Naive thymus-derived CD8-positive, alpha-beta T cell (primary cell): ENCODE measurements at regions of chr7 and their contacts with region 1.

Region 1: GRCh38 chr7:151876899-151877777 is at the start of gene PRKAG2:
- DNase-seq: peak; percentile 65 to 91 (median 81)
- ATAC-seq: peak; percentile 66 to 70
- H3K4me3 Mint-ChIP-seq: peak within 1 kb of the TSS; percentile 91 to 99 (median 96)
- H3K27ac Mint-ChIP-seq: peak within 1 kb of the TSS; percentile 80 to 98 (median 95)
- H3K4me1 Mint-ChIP-seq: peaks cover 8 to 25% (median 21%) of the 10 kb centered on the region in 4 donors
- H3K27me3 Mint-ChIP-seq: no peaks in the 10 kb centered on the region
- polyA plus RNA-seq, gene PRKAG2: 29.5 to 34.1 (median 30.7) TPM

Region 2: GRCh38 chr7:151631968-151632749 is 245.0 kb before region 1 on chr7:
- POLR2A ChIA-PET with region 1: interaction called, 10 read pairs
- DNase-seq: peak; percentile 81 to 90 (median 87)
- ATAC-seq: peak; percentile 84 to 85
- H3K4me3 Mint-ChIP-seq: peak overlapping the region; percentile 93 to 99 (median 96)
- H3K27ac Mint-ChIP-seq: peak overlapping the region; percentile 85 to 99 (median 96)
- H3K4me1 Mint-ChIP-seq: peaks cover 17 to 39% (median 36%) of the 10 kb centered on the region in 4 donors
- H3K27me3 Mint-ChIP-seq: no peaks in the 10 kb centered on the region

Region 3: DNA sequence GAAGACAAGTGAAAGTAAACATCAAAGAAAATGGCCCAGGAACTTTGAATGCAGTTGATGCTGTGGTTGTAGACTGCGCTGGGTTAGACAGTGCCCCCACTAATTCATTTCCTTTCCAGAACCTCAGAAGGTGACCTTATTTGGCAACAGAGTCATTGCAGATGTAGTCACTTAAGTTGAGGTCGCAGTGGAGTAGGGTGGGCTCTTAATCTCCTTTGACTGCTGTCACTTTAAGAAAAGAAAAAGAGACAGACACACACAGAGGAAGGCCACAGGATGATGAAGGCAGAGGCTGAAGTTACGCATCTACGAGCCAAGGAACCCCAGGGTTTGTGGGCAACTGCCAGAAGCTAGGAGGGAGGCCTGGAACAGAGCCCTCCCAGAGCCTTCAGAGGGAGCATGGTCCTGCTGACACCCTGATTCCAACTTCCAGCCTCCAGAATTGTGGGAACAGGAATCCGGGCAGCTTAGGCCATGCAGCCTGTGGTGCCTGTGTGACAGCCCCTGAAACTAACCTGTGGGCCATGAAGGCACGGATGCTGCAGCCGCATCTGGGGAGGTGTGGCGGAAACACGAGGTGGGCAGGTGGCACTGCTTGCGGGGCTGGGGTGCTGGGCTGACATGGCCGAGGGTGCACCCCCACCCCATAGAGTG is 107.8 kb before region 1 on chr7:
- POLR2A ChIA-PET with region 1: interaction called, 10 read pairs
- DNase-seq: peak in 9 of 10 donors; percentile 23 to 88 (median 76)
- ATAC-seq: peak; percentile 90 to 92
- H3K4me3 Mint-ChIP-seq: peak overlapping the region; percentile 69 to 95 (median 86)
- H3K27ac Mint-ChIP-seq: peak overlapping the region; percentile 90 to 99 (median 98)
- H3K4me1 Mint-ChIP-seq: peaks cover 46 to 91% (median 74%) of the 10 kb centered on the region in 4 donors
- H3K27me3 Mint-ChIP-seq: no peaks in the 10 kb centered on the region

Region 4: GRCh38 chr7:151851145-151851751 is 25.9 kb before region 1 on chr7:
- POLR2A ChIA-PET with region 1: interaction called, 16 read pairs
- DNase-seq: peak in 2 of 10 donors; percentile 11 to 14
- ATAC-seq: peak; percentile 53 to 57
- H3K4me3 Mint-ChIP-seq: peak overlapping the region in 9 of 10 donors; percentile 39 to 77 (median 64)
- H3K27ac Mint-ChIP-seq: peak overlapping the region in 9 of 10 donors; percentile 14 to 89 (median 66)
- H3K4me1 Mint-ChIP-seq: peaks cover 18 to 52% (median 41%) of the 10 kb centered on the region in 4 donors
- H3K27me3 Mint-ChIP-seq: no peaks in the 10 kb centered on the region

Region 5: DNA sequence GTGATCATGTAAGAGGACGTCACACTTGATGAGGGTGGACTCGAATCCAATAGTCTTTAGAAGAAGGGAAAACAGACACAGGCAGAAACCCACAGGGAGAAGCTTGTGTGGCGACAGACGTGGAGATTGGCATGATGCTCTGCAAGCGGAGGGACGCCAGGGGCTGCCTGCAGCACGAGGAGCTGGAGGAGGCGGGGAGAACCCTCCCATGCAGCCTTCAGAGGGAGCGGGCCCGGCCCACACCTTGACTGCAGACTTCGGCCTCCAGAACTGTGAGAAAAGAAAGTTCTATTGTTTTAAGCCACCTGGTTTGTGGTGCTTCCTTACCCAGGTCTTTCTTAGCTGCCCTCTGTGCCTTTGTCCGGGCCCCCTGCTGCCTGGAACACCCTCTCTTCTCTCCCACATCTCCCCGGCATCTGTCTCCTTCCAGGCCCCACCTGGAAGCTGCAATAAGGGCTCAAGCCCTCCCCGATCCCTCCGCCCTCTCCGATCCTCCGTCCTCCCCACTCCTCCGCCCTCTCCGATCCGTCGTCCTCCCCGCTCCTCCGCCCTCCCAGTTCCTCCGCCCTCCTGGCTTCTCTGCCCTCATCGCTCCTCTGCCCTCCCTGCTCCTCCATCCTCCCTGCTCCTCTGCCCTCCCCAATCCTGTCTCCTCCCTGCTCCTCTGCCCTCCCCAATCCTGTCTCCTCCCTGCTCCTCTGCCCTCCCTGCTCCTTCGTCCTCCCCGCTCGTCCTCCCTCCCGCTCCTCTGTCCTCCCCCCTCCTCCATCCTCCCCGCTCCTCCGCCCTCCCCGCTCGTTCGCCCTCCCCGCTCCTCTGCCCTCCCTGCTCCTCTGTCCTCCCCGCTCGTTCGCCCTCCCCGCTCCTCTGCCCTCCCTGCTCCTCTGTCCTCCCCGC is 17.2 kb after region 1 on chr7:
- POLR2A ChIA-PET with region 1: no interaction called
- DNase-seq: no peak
- ATAC-seq: no peak
- H3K4me3 Mint-ChIP-seq: no peak overlapping the region
- H3K27ac Mint-ChIP-seq: no peak overlapping the region
- H3K4me1 Mint-ChIP-seq: no peaks in the 10 kb centered on the region
- H3K27me3 Mint-ChIP-seq: peaks cover 3 to 38% (median 18%) of the 10 kb centered on the region in 5 donors

Region 6: DNA sequence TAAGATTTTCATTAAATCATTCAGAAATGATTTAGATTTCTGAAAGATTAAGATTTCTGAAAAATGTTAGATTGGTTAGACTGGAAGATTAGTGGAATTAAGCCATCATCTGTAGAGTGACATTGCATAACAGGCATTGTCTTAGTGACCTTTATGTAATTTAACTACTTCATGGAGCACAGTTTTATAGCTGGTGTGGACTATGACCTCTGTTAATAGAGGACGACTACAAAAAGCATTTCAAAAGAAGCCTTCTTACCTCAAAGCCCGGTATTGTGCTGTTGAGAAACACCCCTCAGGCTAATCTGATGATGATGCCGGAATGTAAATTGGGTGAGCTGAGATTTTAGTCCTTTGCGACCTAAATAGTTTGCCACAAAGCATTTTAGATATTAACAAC is 203.9 kb after region 1 on chr7:
- POLR2A ChIA-PET with region 1: no interaction called
- DNase-seq: no peak
- ATAC-seq: no peak
- H3K4me3 Mint-ChIP-seq: no peak overlapping the region
- H3K27ac Mint-ChIP-seq: no peak overlapping the region
- H3K4me1 Mint-ChIP-seq: peaks cover 28 to 60% (median 37%) of the 10 kb centered on the region in 4 donors
- H3K27me3 Mint-ChIP-seq: no peaks in the 10 kb centered on the region